ENCODE measurements at regions of chr4 and their contacts with region 1.

Region 1: GRCh38 chr4:42656944-42657792 is at the start of gene ATP8A1:
- DNase-seq: peak; percentile 92
- H3K4me3 Mint-ChIP-seq: peak within 1 kb of the TSS; percentile 87
- H3K27ac Mint-ChIP-seq: peak within 1 kb of the TSS; percentile 98
- H3K4me1 Mint-ChIP-seq: peaks cover 30% of the 10 kb centered on the region
- H3K27me3 Mint-ChIP-seq: no peaks in the 10 kb centered on the region
- total RNA-seq, gene ATP8A1: 20.9 to 21.1 TPM

Region 2: DNA sequence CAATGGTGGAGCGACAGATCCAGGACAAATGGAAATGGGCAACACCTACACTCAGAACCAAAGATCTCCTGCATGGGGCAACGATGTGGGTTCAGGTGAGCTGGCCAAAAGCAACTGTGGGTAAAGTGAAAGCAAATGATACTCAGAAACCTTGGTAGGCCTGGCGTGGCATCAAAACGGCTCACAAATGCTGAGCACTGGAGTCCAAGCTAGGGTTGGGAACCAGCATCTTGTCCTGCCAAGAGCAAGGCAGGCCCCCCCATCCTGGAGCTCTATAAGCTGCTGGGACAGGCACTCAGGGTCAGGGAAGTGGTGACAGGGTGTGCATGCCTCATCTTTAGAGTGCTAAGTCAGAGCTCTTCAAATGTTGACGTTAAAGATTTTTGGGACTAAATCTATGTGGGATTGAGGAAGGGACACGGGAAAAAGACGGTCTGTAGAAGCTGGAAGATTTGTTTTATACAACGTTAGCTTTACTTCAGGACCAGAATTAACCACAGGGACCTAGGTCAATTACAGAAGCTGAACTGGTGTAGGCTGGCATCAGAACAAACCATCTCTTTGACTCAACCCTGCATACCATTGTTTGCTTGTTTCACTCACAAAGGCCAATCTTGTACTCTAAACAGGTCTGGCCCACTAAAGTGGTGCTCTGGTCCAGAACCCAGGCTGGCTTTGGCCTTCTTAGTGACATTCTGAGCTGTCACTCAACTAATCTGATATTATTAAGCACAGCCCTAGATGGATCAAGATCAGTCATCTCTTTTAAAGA is 11.0 kb before region 1 on chr4:
- CTCF ChIA-PET with region 1: interaction called, 11 read pairs
- POLR2A ChIA-PET with region 1: interaction called, 3 read pairs
- DNase-seq: no peak
- H3K4me3 Mint-ChIP-seq: no peak overlapping the region
- H3K27ac Mint-ChIP-seq: no peak overlapping the region
- H3K4me1 Mint-ChIP-seq: peaks cover 30% of the 10 kb centered on the region
- H3K27me3 Mint-ChIP-seq: no peaks in the 10 kb centered on the region

Region 3: DNA sequence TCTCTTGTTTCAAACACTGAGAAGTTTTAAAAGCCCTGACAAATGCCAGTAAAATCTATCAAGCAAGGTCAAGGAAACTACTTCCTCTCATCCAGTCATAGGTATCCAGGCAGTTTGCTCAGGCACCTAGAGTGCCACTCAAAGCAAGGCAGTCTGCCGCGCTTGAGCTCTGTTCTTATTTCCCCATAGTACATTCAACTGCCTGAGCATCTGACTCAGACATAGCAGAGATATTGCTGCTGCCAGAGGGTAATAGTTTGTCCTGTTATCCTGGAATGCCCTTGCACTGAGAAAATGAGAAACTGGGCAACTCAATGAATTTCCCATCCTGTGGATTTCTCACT is 15.9 kb after region 1 on chr4:
- CTCF ChIA-PET with region 1: interaction called, 26 read pairs
- POLR2A ChIA-PET with region 1: interaction called, 6 read pairs
- DNase-seq: no peak
- H3K4me3 Mint-ChIP-seq: no peak overlapping the region
- H3K27ac Mint-ChIP-seq: peak overlapping the region; percentile 88
- H3K4me1 Mint-ChIP-seq: peaks cover 39% of the 10 kb centered on the region
- H3K27me3 Mint-ChIP-seq: peaks cover 2% of the 10 kb centered on the region

Measured in activated CD4-positive, alpha-beta T cell treated with anti-CD3 and anti-CD28 coated beads, Interleukin-2, amount 10 ng/mL, durations not matched to agents 7 days and 5 days (primary cell).